Aorta (tissue), 5 donors: ENCODE measurements at regions of chr9 and their contacts with region 1.

Region 1: GRCh38 chr9:7536310-7536939 is 263.2 kb downstream of the DMAC1 start:
- DNase-seq: peak; percentile 50 to 71
- ATAC-seq: no peak
- H3K4me3 ChIP-seq: no peak overlapping the region
- H3K27ac ChIP-seq: no peak overlapping the region
- H3K4me1 ChIP-seq: no peaks in the 10 kb centered on the region
- H3K27me3 ChIP-seq: no peaks in the 10 kb centered on the region

Region 2: DNA sequence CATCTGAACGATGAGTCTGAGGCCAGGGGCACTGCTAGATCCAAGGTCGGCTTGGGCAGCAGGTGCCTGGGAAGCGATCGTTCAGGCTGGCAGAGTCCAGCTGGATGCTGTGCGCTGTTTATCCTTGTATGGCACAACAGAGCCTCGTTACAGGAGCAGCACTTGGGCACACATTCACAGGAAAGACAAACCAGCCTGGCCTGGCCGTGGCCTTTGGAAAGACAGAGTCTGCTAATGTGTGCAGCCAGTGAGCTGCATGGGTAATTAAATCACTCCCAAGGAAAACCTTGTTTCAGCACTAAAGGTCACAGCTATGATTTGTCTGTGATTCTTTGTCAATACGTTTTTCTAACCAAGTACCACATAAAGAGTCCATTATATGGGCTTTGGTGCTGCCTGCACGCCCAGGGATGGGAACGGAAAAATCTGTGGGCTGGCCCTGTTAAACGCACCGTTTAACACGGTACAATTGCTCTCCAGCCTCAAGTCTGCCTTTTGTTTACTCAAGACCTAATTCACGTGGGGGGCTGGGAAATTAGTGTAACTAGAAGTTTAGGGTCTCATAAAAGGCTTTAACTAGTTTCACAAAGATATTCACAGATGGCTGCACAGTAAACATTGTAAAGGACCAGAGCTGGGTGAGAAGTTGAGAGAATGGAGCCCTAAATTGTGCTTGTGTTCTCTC is 269.4 kb before region 1 on chr9:
- intact Hi-C with region 1: loop called in 1 of 2 experiments (anchors 5 kb)
- DNase-seq: no peak
- ATAC-seq: no peak
- H3K4me3 ChIP-seq: no peak overlapping the region
- H3K27ac ChIP-seq: no peak overlapping the region
- H3K4me1 ChIP-seq: no peaks in the 10 kb centered on the region
- H3K27me3 ChIP-seq: no peaks in the 10 kb centered on the region

Region 3: GRCh38 chr9:7467186-7467585 is 69.2 kb before region 1 on chr9:
- intact Hi-C with region 1: no loop called
- DNase-seq: no peak
- ATAC-seq: no peak
- H3K4me3 ChIP-seq: no peak overlapping the region
- H3K27ac ChIP-seq: no peak overlapping the region
- H3K4me1 ChIP-seq: peaks cover 0 to 3% of the 10 kb centered on the region in 2 donors
- H3K27me3 ChIP-seq: no peaks in the 10 kb centered on the region